Activated B cell treated with CpG ODN at 0.5 μM for 24 hours (primary cell): ENCODE measurements at regions of chr2 and their contacts with region 1.

Region 1: GRCh38 chr2:96265840-96266679 is at the starts of genes CIAO1 and TMEM127:
- DNase-seq: peak; percentile 97
- ATAC-seq: peak; percentile 93
- H3K4me3 Mint-ChIP-seq: peak within 1 kb of the TSS; percentile 97
- H3K27ac Mint-ChIP-seq: peak within 1 kb of the TSS; percentile 83
- H3K4me1 Mint-ChIP-seq: peaks cover 45% of the 10 kb centered on the region
- H3K27me3 Mint-ChIP-seq: no peaks in the 10 kb centered on the region
- CTCF ChIP-seq: no peak
- total RNA-seq, gene CIAO1: 65.6 and 71.6 TPM in 2 replicates
- total RNA-seq, gene TMEM127: 36.6 and 43.2 TPM in 2 replicates

Region 2: GRCh38 chr2:96024336-96025193 is 241.5 kb before region 1 on chr2:
- CTCF ChIA-PET with region 1: interaction called, 4 read pairs
- POLR2A ChIA-PET with region 1: no interaction called
- intact Hi-C with region 1: loop called (anchors 10 kb)
- DNase-seq: no peak
- ATAC-seq: no peak
- H3K4me3 Mint-ChIP-seq: no peak overlapping the region
- H3K27ac Mint-ChIP-seq: no peak overlapping the region
- H3K4me1 Mint-ChIP-seq: no peaks in the 10 kb centered on the region
- H3K27me3 Mint-ChIP-seq: no peaks in the 10 kb centered on the region
- CTCF ChIP-seq: no peak

Region 3: GRCh38 chr2:96145036-96145847 is 120.8 kb before region 1 on chr2 and contains the start of gene DUSP2:
- CTCF ChIA-PET with region 1: interaction called, 3 read pairs
- POLR2A ChIA-PET with region 1: interaction called, 12 read pairs
- intact Hi-C with region 1: loop called (anchors 1 kb)
- DNase-seq: peak; percentile 92
- ATAC-seq: peak; percentile 58
- H3K4me3 Mint-ChIP-seq: peak within 1 kb of the TSS; percentile 93
- H3K27ac Mint-ChIP-seq: peak within 1 kb of the TSS; percentile 98
- H3K4me1 Mint-ChIP-seq: peaks cover 71% of the 10 kb centered on the region
- H3K27me3 Mint-ChIP-seq: no peaks in the 10 kb centered on the region
- CTCF ChIP-seq: no peak
- total RNA-seq, gene DUSP2: 118 and 122 TPM in 2 replicates

Region 4: GRCh38 chr2:96225016-96225533 is 41.0 kb before region 1 on chr2:
- CTCF ChIA-PET with region 1: interaction called, 5 read pairs
- POLR2A ChIA-PET with region 1: interaction called, 19 read pairs
- intact Hi-C with region 1: no loop called
- DNase-seq: no peak
- ATAC-seq: peak; percentile 86
- H3K4me3 Mint-ChIP-seq: peak overlapping the region; percentile 66
- H3K27ac Mint-ChIP-seq: peak overlapping the region; percentile 90
- H3K4me1 Mint-ChIP-seq: peaks cover 13% of the 10 kb centered on the region
- H3K27me3 Mint-ChIP-seq: no peaks in the 10 kb centered on the region
- CTCF ChIP-seq: no peak

Region 5: DNA sequence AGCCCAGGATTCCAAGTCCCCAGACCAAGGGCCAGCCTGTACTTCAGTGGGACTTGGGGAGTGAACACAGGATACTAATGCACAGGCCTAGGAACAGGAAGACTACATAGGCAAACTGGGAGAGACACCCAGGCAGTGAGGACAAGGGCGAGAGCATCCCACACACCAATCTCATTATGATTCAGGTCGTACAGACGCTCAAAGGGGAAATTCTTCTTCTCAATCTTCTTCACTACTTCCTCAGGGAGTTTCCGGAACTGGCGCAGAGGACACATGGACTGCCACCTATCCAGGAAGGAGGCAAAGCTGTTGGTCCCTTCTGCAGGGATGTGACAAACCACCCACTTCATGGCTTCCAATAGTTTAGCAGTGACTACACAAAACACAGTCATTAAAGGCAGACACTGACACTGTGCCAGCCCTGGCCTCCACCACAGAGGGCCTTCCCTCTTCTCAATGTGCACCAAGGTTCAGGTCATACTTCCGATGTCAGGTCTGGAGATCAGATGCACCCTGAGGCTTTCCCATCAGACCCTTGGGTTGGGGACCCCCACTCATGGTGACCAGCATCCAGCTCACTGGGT is 21.3 kb after region 1 on chr2:
- CTCF ChIA-PET with region 1: no interaction called
- POLR2A ChIA-PET with region 1: no interaction called
- intact Hi-C with region 1: no loop called
- DNase-seq: no peak
- ATAC-seq: no peak
- H3K4me3 Mint-ChIP-seq: no peak overlapping the region
- H3K27ac Mint-ChIP-seq: no peak overlapping the region
- H3K4me1 Mint-ChIP-seq: no peaks in the 10 kb centered on the region
- H3K27me3 Mint-ChIP-seq: no peaks in the 10 kb centered on the region
- CTCF ChIP-seq: no peak

Region 6: GRCh38 chr2:96305091-96305978 is 39.3 kb after region 1 on chr2 and contains the start of gene SNRNP200:
- CTCF ChIA-PET with region 1: no interaction called
- POLR2A ChIA-PET with region 1: interaction called, 14 read pairs
- intact Hi-C with region 1: loop called (anchors 1 kb)
- DNase-seq: peak; percentile 84
- ATAC-seq: peak; percentile 95
- H3K4me3 Mint-ChIP-seq: peak within 1 kb of the TSS; percentile 97
- H3K27ac Mint-ChIP-seq: peak within 1 kb of the TSS; percentile 97
- H3K4me1 Mint-ChIP-seq: peaks cover 45% of the 10 kb centered on the region
- H3K27me3 Mint-ChIP-seq: no peaks in the 10 kb centered on the region
- CTCF ChIP-seq: no peak
- total RNA-seq, gene SNRNP200: 185 and 208 TPM in 2 replicates

Region 7: DNA sequence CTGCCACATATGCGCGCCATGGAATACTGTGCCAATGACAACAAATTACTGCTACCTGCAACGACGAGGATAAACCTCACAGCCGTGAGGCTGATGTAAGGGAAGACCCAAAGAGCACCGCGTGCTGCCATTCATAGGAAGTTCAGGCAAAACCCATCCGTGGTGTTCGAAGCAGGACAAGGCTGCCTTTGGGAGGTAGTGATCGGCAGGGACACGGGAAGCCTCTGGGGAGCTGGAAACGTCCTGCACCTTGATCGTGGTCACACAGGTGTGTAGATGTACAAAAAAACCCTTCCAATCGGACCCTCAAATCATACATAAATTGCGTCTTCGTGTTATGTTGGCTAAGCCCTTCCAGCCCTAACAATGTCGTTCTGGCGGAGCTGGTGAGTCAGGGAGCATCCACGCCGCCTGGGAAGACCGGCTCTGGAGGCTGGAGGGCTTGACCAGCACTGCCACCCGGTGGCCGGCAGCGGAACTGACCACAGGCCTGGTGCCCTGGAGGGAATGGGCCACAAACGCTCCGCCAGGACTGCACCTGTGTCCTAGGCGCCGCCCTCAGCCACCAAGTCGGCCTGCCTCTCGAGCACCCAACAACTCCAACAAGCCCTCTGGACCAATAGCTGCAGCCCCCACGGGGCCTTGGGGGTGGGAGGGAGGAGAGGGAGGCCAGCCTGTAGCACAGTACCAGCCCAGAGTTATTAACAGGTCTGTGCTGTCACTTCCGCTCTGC is 243.2 kb after region 1 on chr2:
- CTCF ChIA-PET with region 1: no interaction called
- POLR2A ChIA-PET with region 1: no interaction called
- intact Hi-C with region 1: loop called (anchors 2 kb)
- DNase-seq: peak; percentile 73
- ATAC-seq: peak; percentile 67
- H3K4me3 Mint-ChIP-seq: peak overlapping the region; percentile 65
- H3K27ac Mint-ChIP-seq: no peak overlapping the region
- H3K4me1 Mint-ChIP-seq: peaks cover 25% of the 10 kb centered on the region
- H3K27me3 Mint-ChIP-seq: peaks cover 7% of the 10 kb centered on the region
- CTCF ChIP-seq: peak; percentile 23

Region 8: GRCh38 chr2:96760036-96760985 is 494.3 kb after region 1 on chr2 and contains the start of gene CNNM4:
- CTCF ChIA-PET with region 1: no interaction called
- POLR2A ChIA-PET with region 1: no interaction called
- intact Hi-C with region 1: loop called (anchors 10 kb)
- DNase-seq: peak; percentile 89
- ATAC-seq: peak; percentile 91
- H3K4me3 Mint-ChIP-seq: peak within 1 kb of the TSS; percentile 90
- H3K27ac Mint-ChIP-seq: peak within 1 kb of the TSS; percentile 89
- H3K4me1 Mint-ChIP-seq: peaks cover 49% of the 10 kb centered on the region
- H3K27me3 Mint-ChIP-seq: no peaks in the 10 kb centered on the region
- CTCF ChIP-seq: no peak
- total RNA-seq, gene CNNM4: 7.4 and 10.0 TPM in 2 replicates